ENCODE measurements at regions of chr1 and their contacts with region 1.

Region 1: GRCh38 chr1:28505406-28506187 is at the start of gene RCC1:
- DNase-seq: peak; percentile 97 to 98
- ATAC-seq: peak; percentile 98
- H3K4me3 ChIP-seq: peak within 1 kb of the TSS; percentile 87 to 88
- H3K27ac ChIP-seq: peak within 1 kb of the TSS in 1 of 2 donors; percentile 72
- H3K4me1 ChIP-seq: no peaks in the 10 kb centered on the region
- H3K27me3 ChIP-seq: no peaks in the 10 kb centered on the region
- total RNA-seq, gene RCC1: 9.0 to 10.0 TPM

Region 2: DNA sequence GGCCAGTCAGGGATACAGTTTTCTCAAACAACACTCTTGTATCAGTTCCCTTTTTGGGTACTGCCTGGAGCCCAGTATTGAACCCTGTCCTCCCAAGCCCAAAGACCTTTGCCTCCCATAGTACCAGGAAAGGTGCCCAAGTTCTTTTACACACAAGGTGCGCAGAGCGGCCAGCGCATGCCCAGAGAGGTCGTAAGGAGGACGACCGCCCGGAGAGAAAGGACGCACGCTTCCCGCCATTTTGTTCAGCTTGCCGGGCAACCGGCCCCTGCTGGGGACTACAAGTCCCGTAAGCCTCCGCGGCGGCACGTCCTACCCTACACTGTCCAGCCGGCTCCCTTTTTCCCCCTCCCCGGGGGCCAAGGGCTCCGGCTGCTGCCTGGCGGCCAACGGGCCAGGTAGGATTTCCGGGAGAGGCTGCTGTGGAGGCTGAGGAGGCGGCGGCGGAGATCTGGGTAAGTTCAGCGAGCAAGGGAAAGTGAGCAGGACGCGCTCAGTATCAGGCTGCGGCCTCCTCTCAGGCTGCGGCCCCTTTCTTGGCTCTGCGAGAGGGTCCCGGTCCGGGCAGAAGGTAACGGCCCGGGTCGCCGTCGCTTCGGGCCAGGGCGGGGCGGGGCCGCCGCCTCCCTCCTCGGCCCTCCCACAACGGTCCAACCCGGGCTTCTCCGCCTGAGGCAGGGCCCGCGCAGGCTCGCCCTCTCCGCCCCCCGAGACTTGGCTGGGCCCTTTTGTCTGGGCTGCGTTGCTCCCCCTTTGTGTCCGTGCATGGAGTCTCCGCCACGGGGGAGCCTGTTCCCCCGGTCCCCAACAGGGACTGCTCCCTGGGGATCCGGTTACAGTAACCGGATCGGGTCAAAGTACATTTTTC is 136.0 kb before region 1 on chr1 and contains the start of gene PHACTR4:
- intact Hi-C with region 1: loop called in 1 of 2 experiments (anchors 10 kb)
- DNase-seq: peak; percentile 95 to 96
- ATAC-seq: peak; percentile 98
- H3K4me3 ChIP-seq: peak within 1 kb of the TSS; percentile 62 to 77
- H3K27ac ChIP-seq: peak within 1 kb of the TSS; percentile 31 to 81
- H3K4me1 ChIP-seq: peaks cover 2 to 4% of the 10 kb centered on the region in 2 donors
- H3K27me3 ChIP-seq: no peaks in the 10 kb centered on the region
- total RNA-seq, gene PHACTR4: 32.4 to 38.9 TPM

Region 3: GRCh38 chr1:28421744-28422143 is 83.9 kb before region 1 on chr1:
- intact Hi-C with region 1: no loop called
- DNase-seq: no peak
- ATAC-seq: no peak
- H3K4me3 ChIP-seq: no peak overlapping the region
- H3K27ac ChIP-seq: no peak overlapping the region
- H3K4me1 ChIP-seq: no peaks in the 10 kb centered on the region
- H3K27me3 ChIP-seq: no peaks in the 10 kb centered on the region

Region 4: GRCh38 chr1:28437934-28438699 is 67.5 kb before region 1 on chr1:
- intact Hi-C with region 1: loop called in 1 of 2 experiments (anchors 10 kb)
- DNase-seq: peak; percentile 90 to 92
- ATAC-seq: peak; percentile 95
- H3K4me3 ChIP-seq: peak overlapping the region in 1 of 2 donors; percentile 18
- H3K27ac ChIP-seq: peak overlapping the region in 1 of 2 donors; percentile 64
- H3K4me1 ChIP-seq: peaks cover 0 to 5% of the 10 kb centered on the region in 2 donors
- H3K27me3 ChIP-seq: no peaks in the 10 kb centered on the region

Region 5: GRCh38 chr1:28581536-28582247 is 76.1 kb after region 1 on chr1:
- intact Hi-C with region 1: loop called in 1 of 2 experiments (anchors 5 kb)
- DNase-seq: peak; percentile 98
- ATAC-seq: peak; percentile 99
- H3K4me3 ChIP-seq: peak overlapping the region; percentile 62 to 83
- H3K27ac ChIP-seq: peak overlapping the region in 1 of 2 donors; percentile 87
- H3K4me1 ChIP-seq: peaks cover 0 to 4% of the 10 kb centered on the region in 2 donors
- H3K27me3 ChIP-seq: peaks cover 0 to 1% of the 10 kb centered on the region in 2 donors

Measured in aorta (tissue), 5 donors.